Mammary epithelial cell (primary cell): ENCODE measurements at regions of chr13 and their contacts with region 1.

Region 1: GRCh38 chr13:95191821-95192563 is 109.3 kb downstream of the ABCC4 start:
- DNase-seq: peak; percentile 31
- H3K4me3 ChIP-seq: no peak overlapping the region
- H3K27ac ChIP-seq: no peak overlapping the region
- H3K4me1 ChIP-seq: no peaks in the 10 kb centered on the region
- H3K27me3 ChIP-seq: no peaks in the 10 kb centered on the region
- CTCF ChIP-seq: peak; percentile 82 to 91

Region 2: GRCh38 chr13:95301183-95301967 is 109.4 kb after region 1 on chr13 and contains the start of gene ABCC4:
- CTCF ChIA-PET with region 1: interaction called, 3 read pairs
- dilution Hi-C with region 1: no loop called
- in situ Hi-C with region 1: no loop called
- intact Hi-C with region 1: loop called (anchors 1 kb)
- DNase-seq: peak; percentile 72
- H3K4me3 ChIP-seq: peak within 1 kb of the TSS; percentile 64 to 94 (median 75)
- H3K27ac ChIP-seq: peak within 1 kb of the TSS; percentile 45
- H3K4me1 ChIP-seq: peaks cover 12% of the 10 kb centered on the region
- H3K27me3 ChIP-seq: no peaks in the 10 kb centered on the region
- CTCF ChIP-seq: no peak
- total RNA-seq, gene ABCC4: 4.0 to 8.1 TPM

Region 3: GRCh38 chr13:95367309-95367843 is 175.4 kb after region 1 on chr13:
- CTCF ChIA-PET with region 1: no interaction called
- dilution Hi-C with region 1: no loop called
- in situ Hi-C with region 1: no loop called
- intact Hi-C with region 1: no loop called
- DNase-seq: no peak
- H3K4me3 ChIP-seq: no peak overlapping the region
- H3K27ac ChIP-seq: no peak overlapping the region
- H3K4me1 ChIP-seq: no peaks in the 10 kb centered on the region
- H3K27me3 ChIP-seq: peaks cover 2% of the 10 kb centered on the region
- CTCF ChIP-seq: no peak

Region 4: GRCh38 chr13:95378603-95379002 is 186.6 kb after region 1 on chr13:
- CTCF ChIA-PET with region 1: interaction called, 9 read pairs
- dilution Hi-C with region 1: no loop called
- in situ Hi-C with region 1: loop called in 1 of 2 experiments (anchors 10 kb)
- intact Hi-C with region 1: loop called (anchors 1 kb)
- DNase-seq: no peak
- H3K4me3 ChIP-seq: no peak overlapping the region
- H3K27ac ChIP-seq: no peak overlapping the region
- H3K4me1 ChIP-seq: peaks cover 2% of the 10 kb centered on the region
- H3K27me3 ChIP-seq: no peaks in the 10 kb centered on the region
- CTCF ChIP-seq: no peak

Region 5: DNA sequence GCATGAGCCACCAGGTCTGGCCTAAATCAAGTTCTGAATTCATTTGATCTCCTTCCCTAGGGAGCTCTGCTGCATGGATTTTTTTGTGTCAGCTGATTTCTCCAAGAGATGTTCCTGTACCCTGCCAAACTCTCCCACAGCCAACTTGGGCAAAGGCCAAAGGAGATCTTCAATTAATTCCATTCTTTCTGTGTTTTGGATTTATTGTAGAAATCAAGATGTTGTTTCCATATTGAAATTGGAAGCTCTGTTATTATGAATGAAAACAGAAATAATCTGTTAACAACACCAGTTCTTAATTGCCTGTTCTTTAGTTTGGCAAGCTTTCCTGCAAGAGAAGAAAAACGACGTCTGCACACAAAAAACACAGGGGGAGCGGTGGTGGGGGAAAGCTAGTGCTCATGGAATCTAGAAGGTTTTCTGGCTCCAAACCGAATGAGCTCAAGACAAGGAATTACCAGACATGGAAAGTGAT is 195.8 kb after region 1 on chr13:
- CTCF ChIA-PET with region 1: no interaction called
- dilution Hi-C with region 1: no loop called
- in situ Hi-C with region 1: loop called in 1 of 2 experiments (anchors 10 kb)
- intact Hi-C with region 1: no loop called
- DNase-seq: no peak
- H3K4me3 ChIP-seq: no peak overlapping the region
- H3K27ac ChIP-seq: no peak overlapping the region
- H3K4me1 ChIP-seq: no peaks in the 10 kb centered on the region
- H3K27me3 ChIP-seq: peaks cover 2% of the 10 kb centered on the region
- CTCF ChIP-seq: no peak

Region 6: GRCh38 chr13:95480131-95480545 is 288.1 kb after region 1 on chr13:
- CTCF ChIA-PET with region 1: no interaction called
- dilution Hi-C with region 1: no loop called
- in situ Hi-C with region 1: no loop called
- intact Hi-C with region 1: loop called (anchors 1 kb)
- DNase-seq: no peak
- H3K4me3 ChIP-seq: no peak overlapping the region
- H3K27ac ChIP-seq: no peak overlapping the region
- H3K4me1 ChIP-seq: peaks cover 12% of the 10 kb centered on the region
- H3K27me3 ChIP-seq: no peaks in the 10 kb centered on the region
- CTCF ChIP-seq: no peak

Region 7: GRCh38 chr13:95564733-95565291 is 372.8 kb after region 1 on chr13:
- CTCF ChIA-PET with region 1: interaction called, 5 read pairs
- dilution Hi-C with region 1: no loop called
- in situ Hi-C with region 1: no loop called
- intact Hi-C with region 1: loop called (anchors 1 kb)
- DNase-seq: peak; percentile 81
- H3K4me3 ChIP-seq: no peak overlapping the region
- H3K27ac ChIP-seq: no peak overlapping the region
- H3K4me1 ChIP-seq: peaks cover 7% of the 10 kb centered on the region
- H3K27me3 ChIP-seq: no peaks in the 10 kb centered on the region
- CTCF ChIP-seq: no peak